IMR-90 (cell line): ENCODE measurements at regions of chr7 and their contacts with region 1.

Region 1: GRCh38 chr7:20270867-20271266 is 53.7 kb upstream of the MACC1 start:
- DNase-seq: no peak
- ATAC-seq: no peak
- H3K4me3 ChIP-seq: no peak overlapping the region
- H3K27ac ChIP-seq: no peak overlapping the region
- H3K4me1 ChIP-seq: peaks cover 8% of the 10 kb centered on the region
- H3K27me3 ChIP-seq: no peaks in the 10 kb centered on the region
- CTCF ChIP-seq: no peak
- POLR2A ChIP-seq: no peak
- RAD21 ChIP-seq: no peak

Region 2: GRCh38 chr7:20229646-20230500 is 41.0 kb before region 1 on chr7:
- CTCF ChIA-PET with region 1: no interaction called
- POLR2A ChIA-PET with region 1: no interaction called
- dilution Hi-C with region 1: no loop called
- in situ Hi-C with region 1: no loop called
- intact Hi-C with region 1: loop called (anchors 5 kb)
- DNase-seq: peak; percentile 93
- ATAC-seq: peak; percentile 98
- H3K4me3 ChIP-seq: no peak overlapping the region
- H3K27ac ChIP-seq: no peak overlapping the region
- H3K4me1 ChIP-seq: no peaks in the 10 kb centered on the region; the same call in 1 of the 2 replicates
- H3K27me3 ChIP-seq: no peaks in the 10 kb centered on the region
- CTCF ChIP-seq: no peak
- POLR2A ChIP-seq: no peak
- RAD21 ChIP-seq: no peak